ENCODE measurements at regions of chr10 and their contacts with region 1.

Region 1: GRCh38 chr10:51879238-51879637 is 179.8 kb upstream of the CSTF2T start:
- DNase-seq: no peak
- H3K4me3 ChIP-seq: no peak overlapping the region
- H3K4me3 Mint-ChIP-seq: no peak overlapping the region
- H3K27ac Mint-ChIP-seq: no peak overlapping the region
- H3K4me1 ChIP-seq: no peaks in the 10 kb centered on the region
- H3K4me1 Mint-ChIP-seq: no peaks in the 10 kb centered on the region
- H3K27me3 ChIP-seq: no peaks in the 10 kb centered on the region
- H3K27me3 Mint-ChIP-seq: no peaks in the 10 kb centered on the region
- CTCF ChIP-seq: no peak

Region 2: GRCh38 chr10:51937308-51938135 is 58.3 kb after region 1 on chr10:
- CTCF ChIA-PET with region 1: no interaction called
- POLR2A ChIA-PET with region 1: no interaction called
- intact Hi-C with region 1: no loop called
- DNase-seq: no peak
- H3K4me3 ChIP-seq: no peak overlapping the region
- H3K4me3 Mint-ChIP-seq: no peak overlapping the region
- H3K27ac Mint-ChIP-seq: no peak overlapping the region
- H3K4me1 ChIP-seq: no peaks in the 10 kb centered on the region
- H3K4me1 Mint-ChIP-seq: no peaks in the 10 kb centered on the region
- H3K27me3 ChIP-seq: peaks cover 2% of the 10 kb centered on the region; the same call in 1 of the 2 replicates
- H3K27me3 Mint-ChIP-seq: peaks cover 5% of the 10 kb centered on the region
- CTCF ChIP-seq: no peak

Region 3: DNA sequence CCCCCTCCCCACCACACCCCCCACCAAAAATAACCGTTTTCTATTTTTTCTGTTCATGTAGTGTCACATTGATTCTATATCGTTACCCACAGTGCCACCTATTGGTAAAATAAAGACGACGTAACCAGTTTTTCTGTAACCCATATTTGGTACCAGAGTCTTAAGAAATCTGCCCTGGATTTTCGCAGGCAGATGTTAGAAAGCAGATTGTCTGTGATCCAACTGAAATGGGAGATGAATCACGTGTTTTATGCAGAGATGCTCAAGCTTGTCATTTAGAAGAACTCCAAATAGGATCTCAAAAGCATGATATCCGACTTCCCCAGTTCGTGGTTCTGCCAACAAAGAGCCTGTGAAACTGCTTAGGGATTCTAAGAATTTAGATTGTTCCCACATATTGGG is 81.3 kb after region 1 on chr10:
- CTCF ChIA-PET with region 1: no interaction called
- POLR2A ChIA-PET with region 1: no interaction called
- intact Hi-C with region 1: loop called (anchors 1 kb)
- DNase-seq: peak in 1 of 2 experiments; percentile 59
- H3K4me3 ChIP-seq: no peak overlapping the region
- H3K4me3 Mint-ChIP-seq: no peak overlapping the region
- H3K27ac Mint-ChIP-seq: no peak overlapping the region
- H3K4me1 ChIP-seq: no peaks in the 10 kb centered on the region
- H3K4me1 Mint-ChIP-seq: no peaks in the 10 kb centered on the region
- H3K27me3 ChIP-seq: no peaks in the 10 kb centered on the region
- H3K27me3 Mint-ChIP-seq: peaks cover 31% of the 10 kb centered on the region
- CTCF ChIP-seq: peak; percentile 73 to 78

Region 4: DNA sequence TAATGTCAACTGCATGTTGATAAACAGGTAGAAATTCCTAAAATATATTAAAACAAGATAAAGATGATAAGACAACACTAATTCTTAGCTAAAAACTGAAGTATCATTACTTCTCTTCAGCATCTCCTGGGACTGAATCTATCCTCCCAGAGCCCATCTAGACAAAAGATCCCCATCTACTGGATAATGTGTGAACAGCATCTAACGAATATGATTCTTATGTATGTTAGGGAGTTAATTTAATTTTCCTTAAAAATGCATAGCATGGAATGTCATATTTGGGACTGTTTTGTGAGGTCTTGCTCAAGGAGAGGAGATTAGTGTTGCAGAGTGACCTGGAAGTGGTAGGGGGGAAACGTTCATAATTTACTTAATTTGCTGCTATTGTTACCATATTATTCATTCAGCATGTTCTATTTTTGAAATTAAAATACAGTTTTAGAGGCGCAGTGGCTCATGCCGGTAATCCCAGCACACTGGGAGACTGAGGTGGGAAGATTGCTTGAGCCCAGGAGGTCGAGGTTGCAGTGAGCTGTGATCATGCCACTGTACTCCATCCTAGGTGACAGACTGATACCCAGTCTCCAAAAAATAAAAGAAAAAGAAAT is 125.2 kb after region 1 on chr10:
- CTCF ChIA-PET with region 1: no interaction called
- POLR2A ChIA-PET with region 1: no interaction called
- intact Hi-C with region 1: loop called (anchors 1 kb)
- DNase-seq: peak in 1 of 2 experiments; percentile 62
- H3K4me3 ChIP-seq: no peak overlapping the region
- H3K4me3 Mint-ChIP-seq: no peak overlapping the region
- H3K27ac Mint-ChIP-seq: no peak overlapping the region
- H3K4me1 ChIP-seq: no peaks in the 10 kb centered on the region
- H3K4me1 Mint-ChIP-seq: peaks cover 6% of the 10 kb centered on the region
- H3K27me3 ChIP-seq: no peaks in the 10 kb centered on the region
- H3K27me3 Mint-ChIP-seq: no peaks in the 10 kb centered on the region
- CTCF ChIP-seq: peak; percentile 80 to 81

Measured in Caco-2 (cell line).